Transverse colon (tissue), 4 donors: ENCODE measurements at regions of chr1 and their contacts with region 1.

Region 1: DNA sequence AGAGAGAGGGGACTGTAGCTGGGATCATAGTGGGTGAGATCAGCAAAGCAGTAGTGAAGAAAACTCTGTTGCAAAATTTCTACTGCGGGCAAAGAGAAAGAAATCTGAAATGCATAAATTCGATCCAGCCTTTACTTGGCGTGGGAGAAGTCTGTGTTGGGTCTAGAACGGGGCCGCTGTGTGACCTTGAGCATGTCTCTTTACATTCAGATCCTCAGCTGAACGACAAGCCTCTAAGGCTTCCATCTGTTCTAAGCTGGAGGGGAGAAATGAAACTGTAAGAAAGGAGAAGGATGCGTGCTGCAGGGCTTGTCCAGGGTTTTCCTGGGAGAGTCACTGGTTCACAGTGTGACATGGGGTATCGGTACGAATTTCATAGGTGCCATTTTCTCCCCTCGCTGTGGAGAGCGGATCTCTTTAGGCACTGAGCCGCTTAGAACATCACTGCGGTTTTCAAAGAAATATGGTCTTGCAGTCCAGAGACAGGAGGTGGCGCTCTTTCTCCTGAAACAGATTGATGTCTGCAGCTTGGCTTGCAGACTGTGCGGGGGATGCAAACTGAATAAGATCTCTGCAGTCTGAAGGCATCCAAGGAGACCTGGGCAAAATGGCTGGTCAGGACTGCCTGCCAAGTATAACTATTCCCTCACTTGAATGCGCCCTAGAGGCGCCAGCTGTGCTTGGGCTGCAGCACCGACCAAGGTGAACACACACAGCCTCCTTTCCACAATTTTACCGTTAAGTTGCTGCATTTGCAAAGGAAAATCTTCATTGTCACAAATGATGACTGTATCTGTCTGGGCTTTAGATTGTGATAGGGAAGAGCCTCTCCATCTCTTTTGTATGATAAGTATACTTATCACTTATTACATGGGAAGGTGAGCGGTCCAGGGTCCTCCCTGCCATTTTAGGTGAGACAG is 104.1 kb downstream of the XCL2 start:
- DNase-seq: peak; percentile 80
- H3K4me3 ChIP-seq: peak overlapping the region in 1 of 4 donors; percentile 13
- H3K27ac ChIP-seq: peak overlapping the region in 2 of 4 donors; percentile 19 to 39
- H3K4me1 ChIP-seq: peaks cover 0 to 9% (median 7%) of the 10 kb centered on the region in 4 donors
- H3K27me3 ChIP-seq: no peaks in the 10 kb centered on the region
- CTCF ChIP-seq: peak; percentile 68 to 85 (median 77)
- EP300 ChIP-seq: no peak
- POLR2A ChIP-seq: no peak

Region 2: GRCh38 chr1:168312718-168313604 is 126.8 kb before region 1 on chr1:
- in situ Hi-C with region 1: no loop called
- intact Hi-C with region 1: no loop called
- DNase-seq: no peak
- H3K4me3 ChIP-seq: no peak overlapping the region
- H3K27ac ChIP-seq: no peak overlapping the region
- H3K4me1 ChIP-seq: no peaks in the 10 kb centered on the region
- H3K27me3 ChIP-seq: no peaks in the 10 kb centered on the region
- CTCF ChIP-seq: no peak
- EP300 ChIP-seq: no peak
- POLR2A ChIP-seq: no peak

Region 3: GRCh38 chr1:168391759-168392681 is 47.7 kb before region 1 on chr1:
- in situ Hi-C with region 1: no loop called
- intact Hi-C with region 1: no loop called
- DNase-seq: peak; percentile 18
- H3K4me3 ChIP-seq: no peak overlapping the region
- H3K27ac ChIP-seq: peak overlapping the region in 2 of 4 donors; percentile 19 to 21
- H3K4me1 ChIP-seq: peaks cover 0 to 3% (median 0%) of the 10 kb centered on the region in 4 donors
- H3K27me3 ChIP-seq: peaks cover 3% of the 10 kb centered on the region
- CTCF ChIP-seq: no peak
- EP300 ChIP-seq: no peak
- POLR2A ChIP-seq: no peak

Region 4: DNA sequence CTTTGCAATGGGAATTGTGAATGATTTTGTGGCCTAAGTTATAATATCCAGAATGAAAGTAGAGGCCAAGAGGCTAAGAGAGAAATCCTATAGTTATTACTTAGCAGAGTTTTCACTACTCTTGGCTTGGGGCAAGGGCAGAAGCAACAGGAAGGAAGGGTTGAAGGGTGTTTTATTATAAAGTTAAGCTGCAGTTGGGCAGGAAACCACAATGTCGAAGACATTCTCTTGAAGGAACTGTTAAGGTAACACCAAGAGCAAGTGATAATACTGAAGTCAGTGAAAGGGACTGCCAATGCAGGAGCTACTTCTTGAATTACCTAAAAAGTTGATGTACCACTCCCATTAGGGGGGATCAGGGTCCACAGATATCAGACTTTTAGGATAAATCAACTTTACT is 95.8 kb after region 1 on chr1:
- in situ Hi-C with region 1: no loop called
- intact Hi-C with region 1: no loop called
- DNase-seq: no peak
- H3K4me3 ChIP-seq: no peak overlapping the region
- H3K27ac ChIP-seq: peak overlapping the region in 2 of 4 donors; percentile 6 to 21
- H3K4me1 ChIP-seq: no peaks in the 10 kb centered on the region
- H3K27me3 ChIP-seq: no peaks in the 10 kb centered on the region
- CTCF ChIP-seq: no peak
- EP300 ChIP-seq: no peak
- POLR2A ChIP-seq: no peak

Region 5: DNA sequence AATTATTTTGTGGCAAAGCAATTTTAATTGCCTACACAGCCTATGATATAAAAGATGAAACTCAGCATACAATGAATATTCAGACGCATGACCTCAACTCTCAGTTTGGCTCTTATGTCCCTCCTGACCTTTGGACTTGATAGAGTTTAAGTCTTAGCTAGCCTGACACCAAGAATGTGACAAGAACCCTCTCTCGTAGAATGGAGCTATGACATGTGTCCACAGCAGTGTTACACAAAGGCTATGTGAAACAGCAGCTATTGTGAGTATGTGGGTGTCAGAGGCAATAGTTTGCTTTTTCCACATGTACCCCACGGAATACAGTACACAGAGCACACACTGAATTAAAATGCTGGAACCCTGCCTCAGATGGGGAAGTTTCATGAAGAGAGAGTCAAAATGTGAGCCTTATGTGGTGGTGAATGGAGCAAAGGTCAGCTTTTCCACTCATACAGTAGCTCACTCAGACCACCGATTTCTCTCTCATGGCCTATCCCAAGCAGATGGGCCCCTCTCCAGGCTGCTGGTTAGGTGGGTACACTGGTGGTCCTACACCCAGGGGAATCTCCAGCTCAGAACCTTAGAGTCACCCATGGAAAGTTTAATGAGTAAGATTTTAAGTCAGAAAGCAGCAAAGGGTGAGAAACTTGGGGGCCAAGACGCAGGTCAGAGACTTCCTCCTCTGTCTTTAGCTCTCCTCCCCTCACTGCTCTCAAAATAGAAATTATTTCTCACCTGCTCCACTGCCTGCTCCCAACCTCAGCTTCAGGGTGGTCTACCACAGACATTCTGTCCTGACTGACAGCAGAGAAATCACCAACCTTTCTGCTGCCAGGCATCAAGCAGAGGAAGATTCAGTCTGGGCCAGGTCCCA is 114.2 kb after region 1 on chr1:
- in situ Hi-C with region 1: loop called in 1 of 4 experiments (anchors 25 kb)
- intact Hi-C with region 1: no loop called
- DNase-seq: no peak
- H3K4me3 ChIP-seq: no peak overlapping the region
- H3K27ac ChIP-seq: no peak overlapping the region
- H3K4me1 ChIP-seq: peaks cover 0 to 2% (median 0%) of the 10 kb centered on the region in 4 donors
- H3K27me3 ChIP-seq: no peaks in the 10 kb centered on the region
- CTCF ChIP-seq: no peak
- EP300 ChIP-seq: no peak
- POLR2A ChIP-seq: no peak

Region 6: DNA sequence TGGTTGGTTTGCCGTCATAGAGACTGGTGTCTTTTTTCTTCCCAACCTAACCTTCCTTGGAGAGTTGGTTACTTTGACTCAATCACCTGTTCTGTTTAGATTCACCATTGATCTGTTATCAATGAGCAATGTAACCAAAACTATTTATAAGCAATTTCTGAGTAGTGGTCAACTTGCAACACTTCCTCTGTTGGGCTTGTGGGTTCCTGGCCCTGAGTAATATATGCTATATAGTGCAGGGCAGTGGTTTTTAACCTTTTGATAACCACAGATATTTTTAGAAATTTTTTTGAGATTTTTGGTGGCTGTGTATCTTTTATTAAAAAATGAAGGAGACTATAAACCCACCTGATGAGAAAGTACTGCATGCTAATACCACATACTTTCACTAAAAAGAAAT is 127.3 kb after region 1 on chr1:
- in situ Hi-C with region 1: loop called in 2 of 4 experiments (anchors 10 to 25 kb)
- intact Hi-C with region 1: loop called (anchors 10 kb)
- DNase-seq: no peak
- H3K4me3 ChIP-seq: no peak overlapping the region
- H3K27ac ChIP-seq: no peak overlapping the region
- H3K4me1 ChIP-seq: no peaks in the 10 kb centered on the region
- H3K27me3 ChIP-seq: no peaks in the 10 kb centered on the region
- CTCF ChIP-seq: no peak
- EP300 ChIP-seq: no peak
- POLR2A ChIP-seq: no peak

Region 7: GRCh38 chr1:168572633-168573032 is 132.9 kb after region 1 on chr1:
- in situ Hi-C with region 1: loop called in 2 of 4 experiments (anchors 10 to 25 kb)
- intact Hi-C with region 1: loop called (anchors 10 kb)
- DNase-seq: no peak
- H3K4me3 ChIP-seq: no peak overlapping the region
- H3K27ac ChIP-seq: no peak overlapping the region
- H3K4me1 ChIP-seq: no peaks in the 10 kb centered on the region
- H3K27me3 ChIP-seq: no peaks in the 10 kb centered on the region
- CTCF ChIP-seq: no peak
- EP300 ChIP-seq: no peak
- POLR2A ChIP-seq: no peak

Region 8: DNA sequence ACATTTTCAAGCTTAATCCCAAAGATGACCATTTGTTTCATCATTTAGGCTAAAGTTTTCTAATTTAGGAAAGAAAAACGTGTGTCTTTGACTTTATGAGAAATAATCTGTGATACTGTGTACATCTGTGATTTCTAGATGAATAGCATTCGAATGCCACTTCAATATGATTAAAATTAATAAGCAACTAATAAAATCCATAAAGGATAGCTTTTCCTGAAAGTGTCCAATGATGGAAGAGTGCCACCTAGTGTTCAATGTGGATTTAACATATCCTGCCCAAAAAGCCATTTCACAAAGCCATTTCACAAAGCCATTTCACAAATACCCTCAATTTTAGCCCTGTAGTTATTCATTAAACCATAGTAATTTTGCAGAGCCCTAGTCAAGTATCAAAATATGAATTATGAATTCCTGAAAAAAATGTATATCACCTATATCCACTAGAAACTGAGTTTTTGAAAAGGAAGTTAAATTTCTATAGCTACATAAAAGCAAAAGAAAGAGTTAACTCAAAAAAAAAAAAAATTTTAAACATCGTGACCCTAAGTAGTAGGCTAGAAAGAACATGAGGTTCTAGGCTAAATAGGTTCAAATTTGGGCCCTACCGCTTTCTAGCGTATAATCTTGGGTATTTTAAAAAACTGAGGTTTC is 908.8 kb after region 1 on chr1:
- in situ Hi-C with region 1: loop called in 2 of 4 experiments (anchors 25 kb)
- intact Hi-C with region 1: no loop called
- DNase-seq: no peak
- H3K4me3 ChIP-seq: no peak overlapping the region
- H3K27ac ChIP-seq: no peak overlapping the region
- H3K4me1 ChIP-seq: peaks cover 0 to 2% (median 0%) of the 10 kb centered on the region in 4 donors
- H3K27me3 ChIP-seq: no peaks in the 10 kb centered on the region
- CTCF ChIP-seq: peak; percentile 76 to 91 (median 84)
- EP300 ChIP-seq: no peak
- POLR2A ChIP-seq: no peak

Region 9: GRCh38 chr1:169367486-169368405 is 928.0 kb after region 1 on chr1 and contains the starts of genes BLZF1 and NME7:
- in situ Hi-C with region 1: loop called in 1 of 4 experiments (anchors 25 kb)
- intact Hi-C with region 1: no loop called
- DNase-seq: peak; percentile 98
- H3K4me3 ChIP-seq: peak within 1 kb of the TSS; percentile 52 to 84 (median 67)
- H3K27ac ChIP-seq: peak within 1 kb of the TSS; percentile 84 to 91 (median 87)
- H3K4me1 ChIP-seq: peaks cover 5 to 26% (median 22%) of the 10 kb centered on the region in 4 donors
- H3K27me3 ChIP-seq: no peaks in the 10 kb centered on the region
- CTCF ChIP-seq: no peak
- EP300 ChIP-seq: no peak
- POLR2A ChIP-seq: peak; percentile 50
- total RNA-seq, gene BLZF1: 14.5 to 33.3 (median 28.1) TPM
- total RNA-seq, gene NME7: 1.9 to 15.9 (median 8.3) TPM